WTC11 (cell line): ENCODE measurements at regions of chr10 and their contacts with region 1.

Region 1: GRCh38 chr10:100912605-100913469 is at the start of gene SLF2:
- DNase-seq: peak; percentile 96
- ATAC-seq: peak; percentile 97
- H3K4me3 Mint-ChIP-seq: peak within 1 kb of the TSS; percentile 96
- H3K27ac Mint-ChIP-seq: peak within 1 kb of the TSS; percentile 96
- H3K4me1 Mint-ChIP-seq: peaks cover 32% of the 10 kb centered on the region
- H3K27me3 Mint-ChIP-seq: no peaks in the 10 kb centered on the region
- CTCF ChIP-seq: no peak
- total RNA-seq, gene SLF2: 14.3 to 17.3 TPM (median 16.8 TPM) in 3 replicates

Region 2: GRCh38 chr10:100838986-100839385 is 73.9 kb before region 1 on chr10:
- CTCF ChIA-PET with region 1: no interaction called
- POLR2A ChIA-PET with region 1: no interaction called
- DNase-seq: no peak
- ATAC-seq: no peak
- H3K4me3 Mint-ChIP-seq: no peak overlapping the region
- H3K27ac Mint-ChIP-seq: no peak overlapping the region
- H3K4me1 Mint-ChIP-seq: no peaks in the 10 kb centered on the region
- H3K27me3 Mint-ChIP-seq: peaks cover 15% of the 10 kb centered on the region
- CTCF ChIP-seq: no peak

Region 3: GRCh38 chr10:100934084-100934659 is 21.3 kb after region 1 on chr10:
- CTCF ChIA-PET with region 1: interaction called, 13 read pairs
- POLR2A ChIA-PET with region 1: no interaction called
- DNase-seq: no peak
- ATAC-seq: no peak
- H3K4me3 Mint-ChIP-seq: no peak overlapping the region
- H3K27ac Mint-ChIP-seq: no peak overlapping the region
- H3K4me1 Mint-ChIP-seq: no peaks in the 10 kb centered on the region
- H3K27me3 Mint-ChIP-seq: no peaks in the 10 kb centered on the region
- CTCF ChIP-seq: peak; percentile 39; the same call in 1 of the 2 replicates